Caco-2 (cell line): ENCODE measurements at regions of chr20 and their contacts with region 1.

Region 1: DNA sequence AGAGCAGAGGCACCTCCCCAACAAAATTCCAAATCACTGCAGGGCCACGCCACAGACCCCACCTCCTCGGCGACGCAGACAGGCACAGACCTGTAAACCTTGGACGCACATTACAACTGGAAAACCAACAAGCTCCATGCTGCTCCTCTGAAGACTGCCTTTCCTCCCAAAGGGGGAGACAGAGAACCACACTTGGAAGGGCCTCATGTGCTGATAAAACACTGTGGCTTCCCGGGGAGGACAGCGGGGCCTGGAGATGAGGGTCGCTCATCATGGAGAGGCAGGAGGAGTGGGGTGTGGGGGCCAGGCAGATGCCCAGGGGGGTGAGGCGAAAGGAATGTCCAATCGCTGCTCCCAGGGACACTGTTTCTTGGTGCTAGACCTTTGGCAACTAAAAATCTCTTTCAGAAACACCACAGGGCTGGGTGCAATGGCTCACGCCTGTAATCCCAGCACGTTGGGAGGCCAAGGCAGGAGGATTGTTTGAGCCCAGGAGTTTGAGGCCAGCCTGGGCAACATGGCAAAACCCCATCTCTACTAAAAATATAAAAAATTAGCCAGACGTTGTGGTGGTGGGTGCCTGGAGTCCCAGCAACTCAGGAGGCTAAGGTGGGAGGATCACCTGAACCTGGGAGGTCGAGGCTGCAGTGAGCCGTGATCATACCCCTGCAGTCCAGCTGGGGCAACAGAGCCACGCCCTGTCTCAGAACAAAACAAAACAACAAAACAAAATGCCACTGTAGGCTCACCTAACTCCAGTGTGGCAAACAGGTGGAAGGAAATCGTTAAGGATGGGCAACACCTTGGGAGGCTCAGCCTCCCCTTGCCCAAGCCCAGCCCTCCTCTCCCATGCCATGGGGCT is 53.8 kb downstream of the ABHD12 start:
- DNase-seq: peak; percentile 62 to 73
- H3K4me3 ChIP-seq: no peak overlapping the region
- H3K4me3 Mint-ChIP-seq: no peak overlapping the region
- H3K27ac Mint-ChIP-seq: peak overlapping the region; percentile 36
- H3K4me1 ChIP-seq: peaks cover 26% of the 10 kb centered on the region
- H3K4me1 Mint-ChIP-seq: peaks cover 28% of the 10 kb centered on the region
- H3K27me3 ChIP-seq: no peaks in the 10 kb centered on the region
- H3K27me3 Mint-ChIP-seq: no peaks in the 10 kb centered on the region
- CTCF ChIP-seq: peak; percentile 60 to 81

Region 2: DNA sequence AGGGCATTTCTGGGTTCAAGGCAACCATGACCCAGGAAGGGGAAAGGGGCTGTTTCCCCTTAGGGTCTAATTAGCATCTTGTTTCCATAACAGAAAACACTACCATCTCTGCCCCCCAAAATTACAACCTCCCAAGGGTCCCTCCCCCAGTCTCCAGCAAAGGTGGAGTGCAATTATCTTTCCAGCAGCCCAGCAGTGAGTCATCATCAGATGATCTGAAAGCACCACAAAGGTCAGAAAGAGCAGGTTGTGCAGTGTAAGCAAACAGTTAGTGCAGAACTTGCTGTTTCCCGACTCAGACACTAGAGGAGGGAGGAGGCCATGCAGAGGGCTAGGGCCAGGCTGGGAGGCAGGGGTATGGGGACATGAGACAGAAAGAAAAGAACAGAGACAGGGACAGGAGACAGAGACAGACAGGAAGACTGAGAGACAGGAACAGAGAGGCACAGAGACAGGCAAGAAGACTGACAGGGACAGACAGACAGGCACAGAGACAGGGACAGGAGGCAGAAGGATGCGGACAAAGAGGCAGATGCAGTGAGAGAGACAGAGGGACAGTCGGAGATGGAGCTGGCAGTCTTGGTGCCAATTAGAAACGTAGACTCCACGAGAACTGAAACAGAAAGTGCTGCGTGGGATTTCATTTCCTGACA is 26.4 kb before region 1 on chr20:
- CTCF ChIA-PET with region 1: interaction called, 4 read pairs
- POLR2A ChIA-PET with region 1: no interaction called
- intact Hi-C with region 1: loop called (anchors 1 kb)
- DNase-seq: peak; percentile 87 to 90
- H3K4me3 ChIP-seq: no peak overlapping the region
- H3K4me3 Mint-ChIP-seq: peak overlapping the region; percentile 51
- H3K27ac Mint-ChIP-seq: peak overlapping the region; percentile 87
- H3K4me1 ChIP-seq: peaks cover 31% of the 10 kb centered on the region
- H3K4me1 Mint-ChIP-seq: peaks cover 28% of the 10 kb centered on the region
- H3K27me3 ChIP-seq: no peaks in the 10 kb centered on the region
- H3K27me3 Mint-ChIP-seq: no peaks in the 10 kb centered on the region
- CTCF ChIP-seq: peak; percentile 57 to 91

Region 3: GRCh38 chr20:25353747-25354705 is 17.2 kb after region 1 on chr20:
- CTCF ChIA-PET with region 1: interaction called, 3 read pairs
- POLR2A ChIA-PET with region 1: no interaction called
- intact Hi-C with region 1: loop called (anchors 2 kb)
- DNase-seq: peak; percentile 73 to 78
- H3K4me3 ChIP-seq: no peak overlapping the region
- H3K4me3 Mint-ChIP-seq: peak overlapping the region; percentile 18
- H3K27ac Mint-ChIP-seq: peak overlapping the region; percentile 46
- H3K4me1 ChIP-seq: peaks cover 27% of the 10 kb centered on the region
- H3K4me1 Mint-ChIP-seq: peaks cover 18% of the 10 kb centered on the region
- H3K27me3 ChIP-seq: no peaks in the 10 kb centered on the region
- H3K27me3 Mint-ChIP-seq: no peaks in the 10 kb centered on the region
- CTCF ChIP-seq: no peak

Region 4: GRCh38 chr20:25390538-25391528 is 54.0 kb after region 1 on chr20 and contains the start of gene ABHD12:
- CTCF ChIA-PET with region 1: interaction called, 70 read pairs
- POLR2A ChIA-PET with region 1: interaction called, 9 read pairs
- intact Hi-C with region 1: loop called (anchors 2 kb)
- DNase-seq: peak; percentile 97 to 98
- H3K4me3 ChIP-seq: peak within 1 kb of the TSS; percentile 97
- H3K4me3 Mint-ChIP-seq: peak within 1 kb of the TSS; percentile 91
- H3K27ac Mint-ChIP-seq: peak within 1 kb of the TSS; percentile 79
- H3K4me1 ChIP-seq: peaks cover 10% of the 10 kb centered on the region
- H3K4me1 Mint-ChIP-seq: peaks cover 6% of the 10 kb centered on the region
- H3K27me3 ChIP-seq: no peaks in the 10 kb centered on the region
- H3K27me3 Mint-ChIP-seq: no peaks in the 10 kb centered on the region
- CTCF ChIP-seq: no peak
- total RNA-seq, gene ABHD12: 84.9 and 104 TPM in 2 replicates

Region 5: GRCh38 chr20:25399037-25399430 is 62.2 kb after region 1 on chr20:
- CTCF ChIA-PET with region 1: interaction called, 70 read pairs
- POLR2A ChIA-PET with region 1: interaction called, 6 read pairs
- intact Hi-C with region 1: loop called (anchors 1 kb)
- DNase-seq: peak in 1 of 2 experiments; percentile 71
- H3K4me3 ChIP-seq: no peak overlapping the region
- H3K4me3 Mint-ChIP-seq: no peak overlapping the region
- H3K27ac Mint-ChIP-seq: peak overlapping the region; percentile 87
- H3K4me1 ChIP-seq: peaks cover 25% of the 10 kb centered on the region
- H3K4me1 Mint-ChIP-seq: peaks cover 21% of the 10 kb centered on the region
- H3K27me3 ChIP-seq: no peaks in the 10 kb centered on the region
- H3K27me3 Mint-ChIP-seq: no peaks in the 10 kb centered on the region
- CTCF ChIP-seq: peak; percentile 45 to 52

Region 6: GRCh38 chr20:25574425-25574824 is 237.6 kb after region 1 on chr20:
- CTCF ChIA-PET with region 1: no interaction called
- POLR2A ChIA-PET with region 1: no interaction called
- intact Hi-C with region 1: loop called (anchors 1 kb)
- DNase-seq: peak; percentile 65 to 71
- H3K4me3 ChIP-seq: no peak overlapping the region
- H3K4me3 Mint-ChIP-seq: no peak overlapping the region
- H3K27ac Mint-ChIP-seq: no peak overlapping the region
- H3K4me1 ChIP-seq: peaks cover 9% of the 10 kb centered on the region; the same call in 1 of the 2 replicates
- H3K4me1 Mint-ChIP-seq: peaks cover 7% of the 10 kb centered on the region
- H3K27me3 ChIP-seq: no peaks in the 10 kb centered on the region
- H3K27me3 Mint-ChIP-seq: no peaks in the 10 kb centered on the region
- CTCF ChIP-seq: peak; percentile 44 to 80